H1 (cell line): ENCODE measurements at regions of chr1 and their contacts with region 1.

Region 1: GRCh38 chr1:75233302-75233929 is 99.2 kb downstream of the LHX8 start:
- DNase-seq: no peak
- H3K4me3 ChIP-seq: no peak overlapping the region
- H3K27ac ChIP-seq: no peak overlapping the region
- H3K4me1 ChIP-seq: no peaks in the 10 kb centered on the region
- H3K27me3 ChIP-seq: no peaks in the 10 kb centered on the region
- CTCF ChIP-seq: peak in 2 of 3 experiments; percentile 40 to 64; a peak in 2 of 4 replicates
- EP300 ChIP-seq: no peak
- POLR2A ChIP-seq: no peak
- RAD21 ChIP-seq: peak; percentile 73 to 77

Region 2: DNA sequence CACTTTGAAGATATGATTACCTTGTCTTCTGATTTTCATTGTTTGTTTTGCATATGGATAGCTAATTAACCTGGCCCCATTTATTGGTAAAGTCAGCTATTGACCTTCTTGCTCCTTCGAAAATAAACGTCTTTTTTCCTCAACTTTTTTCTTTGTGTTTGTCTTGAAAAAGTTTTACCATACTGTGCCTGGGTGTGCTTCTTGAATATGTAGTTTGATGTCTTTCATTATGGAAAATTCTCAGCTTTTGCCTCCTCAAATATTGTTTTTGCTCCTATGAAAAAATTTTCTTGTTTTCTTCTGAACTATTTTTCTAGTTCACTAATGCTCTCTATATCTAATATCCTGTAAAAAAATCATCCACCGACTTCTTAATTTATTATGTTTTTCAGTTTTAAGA is 74.3 kb before region 1 on chr1:
- CTCF ChIA-PET with region 1: no interaction called
- POLR2A ChIA-PET with region 1: no interaction called
- DNase-seq: no peak
- H3K4me3 ChIP-seq: no peak overlapping the region
- H3K27ac ChIP-seq: no peak overlapping the region
- H3K4me1 ChIP-seq: peaks cover 0 to 2% (median 0%) of the 10 kb centered on the region in 4 experiments; a peak in 1 of 7 replicates
- H3K27me3 ChIP-seq: no peaks in the 10 kb centered on the region
- CTCF ChIP-seq: no peak
- EP300 ChIP-seq: no peak
- POLR2A ChIP-seq: no peak
- RAD21 ChIP-seq: no peak

Region 3: DNA sequence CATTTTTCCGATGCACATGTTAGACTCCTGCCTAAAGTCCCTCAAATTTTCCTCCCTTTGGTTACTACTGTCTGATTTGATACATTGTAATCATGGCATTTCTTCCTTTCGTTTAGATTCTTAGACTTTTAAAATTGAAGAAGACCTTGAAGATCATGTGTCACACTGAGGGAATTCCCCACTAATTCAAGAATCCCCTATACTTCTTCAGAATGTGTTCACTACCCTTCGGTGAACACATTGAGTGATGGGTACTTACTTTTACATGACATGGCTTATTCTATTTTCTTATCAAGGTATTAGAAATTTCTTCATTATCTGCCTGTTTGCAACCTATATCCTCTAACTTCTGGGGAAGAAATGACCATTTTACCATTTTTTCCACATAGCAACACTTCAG is 13.3 kb before region 1 on chr1:
- CTCF ChIA-PET with region 1: interaction called, 17 read pairs
- POLR2A ChIA-PET with region 1: interaction called, 3 read pairs
- DNase-seq: no peak
- H3K4me3 ChIP-seq: no peak overlapping the region
- H3K27ac ChIP-seq: no peak overlapping the region
- H3K4me1 ChIP-seq: no peaks in the 10 kb centered on the region
- H3K27me3 ChIP-seq: no peaks in the 10 kb centered on the region
- CTCF ChIP-seq: no peak
- EP300 ChIP-seq: no peak
- POLR2A ChIP-seq: no peak
- RAD21 ChIP-seq: no peak

Region 4: GRCh38 chr1:75245239-75245638 is 11.8 kb after region 1 on chr1:
- CTCF ChIA-PET with region 1: interaction called, 40 read pairs
- POLR2A ChIA-PET with region 1: no interaction called
- DNase-seq: no peak
- H3K4me3 ChIP-seq: no peak overlapping the region
- H3K27ac ChIP-seq: no peak overlapping the region
- H3K4me1 ChIP-seq: no peaks in the 10 kb centered on the region
- H3K27me3 ChIP-seq: no peaks in the 10 kb centered on the region
- CTCF ChIP-seq: no peak
- EP300 ChIP-seq: no peak
- POLR2A ChIP-seq: no peak
- RAD21 ChIP-seq: no peak

Region 5: GRCh38 chr1:75257424-75257823 is 24.0 kb after region 1 on chr1:
- CTCF ChIA-PET with region 1: interaction called, 23 read pairs
- POLR2A ChIA-PET with region 1: no interaction called
- DNase-seq: peak; percentile 21 to 60
- H3K4me3 ChIP-seq: no peak overlapping the region
- H3K27ac ChIP-seq: no peak overlapping the region
- H3K4me1 ChIP-seq: no peaks in the 10 kb centered on the region
- H3K27me3 ChIP-seq: no peaks in the 10 kb centered on the region
- CTCF ChIP-seq: peak; percentile 28 to 68 (median 49)
- EP300 ChIP-seq: no peak
- POLR2A ChIP-seq: no peak
- RAD21 ChIP-seq: peak; percentile 38 to 52; a peak in 3 of 4 replicates

Region 6: DNA sequence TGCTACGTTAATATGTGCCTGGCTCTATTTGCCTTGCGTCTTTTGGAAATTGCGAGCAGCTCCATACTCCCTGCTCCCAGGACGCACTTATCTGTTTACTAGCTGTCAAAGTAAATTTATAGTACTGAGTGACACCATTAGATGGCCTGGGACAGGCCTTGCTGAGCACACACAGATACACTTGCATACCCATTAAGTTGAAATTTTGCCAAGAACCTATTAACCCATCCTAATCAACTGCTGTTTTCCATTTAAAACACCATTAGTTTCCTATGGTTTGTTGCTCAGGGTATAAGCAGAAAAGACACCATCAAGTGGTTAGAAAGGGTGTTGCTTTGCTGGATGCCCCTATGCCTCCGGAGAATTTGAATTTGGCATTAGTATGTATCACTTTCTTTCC is 190.2 kb after region 1 on chr1:
- CTCF ChIA-PET with region 1: interaction called, 14 read pairs
- POLR2A ChIA-PET with region 1: no interaction called
- DNase-seq: no peak
- H3K4me3 ChIP-seq: no peak overlapping the region
- H3K27ac ChIP-seq: no peak overlapping the region
- H3K4me1 ChIP-seq: no peaks in the 10 kb centered on the region
- H3K27me3 ChIP-seq: no peaks in the 10 kb centered on the region
- CTCF ChIP-seq: peak in 2 of 3 experiments; percentile 37 to 57; a peak in 2 of 4 replicates
- EP300 ChIP-seq: no peak
- POLR2A ChIP-seq: no peak
- RAD21 ChIP-seq: peak; percentile 59 to 61

Region 7: GRCh38 chr1:75632350-75632949 is 399.0 kb after region 1 on chr1:
- CTCF ChIA-PET with region 1: interaction called, 10 read pairs
- POLR2A ChIA-PET with region 1: no interaction called
- DNase-seq: no peak
- H3K4me3 ChIP-seq: no peak overlapping the region
- H3K27ac ChIP-seq: no peak overlapping the region
- H3K4me1 ChIP-seq: peaks cover 0 to 6% (median under 1%) of the 10 kb centered on the region in 4 experiments; a peak in 4 of 7 replicates
- H3K27me3 ChIP-seq: peaks cover 0 to 1% (median 0%) of the 10 kb centered on the region in 4 experiments; a peak in 1 of 7 replicates
- CTCF ChIP-seq: peak in 2 of 3 experiments; percentile 49 to 61; a peak in 2 of 4 replicates
- EP300 ChIP-seq: no peak
- POLR2A ChIP-seq: no peak
- RAD21 ChIP-seq: peak; percentile 76 to 78